ENCODE measurements at regions of chr18 and their contacts with region 1.

Region 1: GRCh38 chr18:44325903-44326635 is 354.6 kb upstream of the SETBP1 start:
- DNase-seq: peak; percentile 42
- H3K4me3 ChIP-seq: no peak overlapping the region; a peak in 1 of 4 replicates
- H3K27ac ChIP-seq: no peak overlapping the region
- H3K4me1 ChIP-seq: peaks cover 0 to 6% of the 10 kb centered on the region in 2 experiments; a peak in 2 of 4 replicates
- H3K27me3 ChIP-seq: no peaks in the 10 kb centered on the region
- CTCF ChIP-seq: peak; percentile 78
- EP300 ChIP-seq: no peak
- RAD21 ChIP-seq: peak; percentile 78

Region 2: GRCh38 chr18:44130376-44130942 is 195.6 kb before region 1 on chr18:
- CTCF ChIA-PET with region 1: interaction called, 16 read pairs
- POLR2A ChIA-PET with region 1: no interaction called
- DNase-seq: peak; percentile 59
- H3K4me3 ChIP-seq: no peak overlapping the region
- H3K27ac ChIP-seq: no peak overlapping the region
- H3K4me1 ChIP-seq: no peaks in the 10 kb centered on the region; a peak in 1 of 4 replicates
- H3K27me3 ChIP-seq: no peaks in the 10 kb centered on the region
- CTCF ChIP-seq: peak; percentile 79
- EP300 ChIP-seq: no peak
- RAD21 ChIP-seq: peak; percentile 87